Heart left ventricle (tissue), 16 donors: ENCODE measurements at regions of chr6 and their contacts with region 1.

Region 1: DNA sequence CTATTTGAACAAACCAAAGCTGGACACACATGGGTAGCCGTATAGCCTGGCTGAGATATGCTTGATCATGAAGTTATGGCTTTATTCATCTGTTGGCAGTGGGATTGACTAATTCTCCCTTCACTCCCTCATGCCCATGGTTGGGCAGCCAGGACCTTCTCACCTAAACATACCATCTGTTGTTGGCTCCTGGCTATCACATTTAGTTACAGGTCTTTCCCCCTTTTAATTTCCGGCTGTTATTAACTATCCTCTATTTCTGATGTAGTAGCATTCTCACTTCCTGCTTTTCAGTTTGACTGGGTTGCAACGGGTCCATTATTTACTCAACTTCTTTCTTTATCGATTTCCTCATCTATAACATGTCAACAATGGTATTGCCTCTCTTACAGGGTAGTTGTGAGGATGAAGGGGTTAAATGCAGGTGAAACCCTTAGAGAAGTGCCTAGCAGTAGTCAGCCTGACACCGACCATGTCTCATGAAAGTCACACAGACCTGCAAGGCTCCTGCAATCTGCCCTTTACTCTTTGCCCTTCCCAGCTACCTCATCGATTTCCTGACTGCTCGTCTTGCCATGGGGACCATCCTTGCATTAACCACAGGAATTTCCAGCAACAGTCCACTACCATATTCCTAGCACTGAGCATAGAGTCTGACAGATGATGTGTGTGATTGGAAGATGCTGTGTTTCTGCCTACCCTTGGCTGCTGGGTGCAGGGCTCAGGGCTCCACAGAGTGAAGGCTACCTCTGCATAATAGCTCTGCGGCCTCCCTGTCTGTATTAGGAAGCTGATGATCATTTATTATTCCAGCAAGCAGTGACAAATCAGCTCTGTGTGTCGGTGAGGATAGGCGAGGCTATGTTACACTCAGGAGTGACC is 42.2 kb downstream of the PPP1R14C start:
- DNase-seq: no peak
- ATAC-seq: peak in 1 of 4 donors; percentile 35
- H3K4me3 ChIP-seq: no peak overlapping the region
- H3K27ac ChIP-seq: no peak overlapping the region
- H3K4me1 ChIP-seq: peaks cover 0 to 20% (median 3%) of the 10 kb centered on the region in 12 donors
- H3K27me3 ChIP-seq: no peaks in the 10 kb centered on the region
- CTCF ChIP-seq: no peak
- POLR2A ChIP-seq: no peak

Region 2: GRCh38 chr6:150238336-150238741 is 53.2 kb after region 1 on chr6:
- intact Hi-C with region 1: loop called in 1 of 10 experiments (anchors 10 kb)
- DNase-seq: peak; percentile 40 to 81 (median 76)
- ATAC-seq: peak; percentile 81 to 97 (median 90)
- H3K4me3 ChIP-seq: no peak overlapping the region
- H3K27ac ChIP-seq: peak overlapping the region in 9 of 12 donors; percentile 11 to 77 (median 56)
- H3K4me1 ChIP-seq: peaks cover 0 to 35% (median 14%) of the 10 kb centered on the region in 12 donors
- H3K27me3 ChIP-seq: no peaks in the 10 kb centered on the region
- CTCF ChIP-seq: no peak
- POLR2A ChIP-seq: no peak